Posterior cingulate gyrus (tissue), 11 donors: ENCODE measurements at regions of chr9 and their contacts with region 1.

Region 1: GRCh38 chr9:130042833-130043653 is at the start of gene FNBP1:
- DNase-seq: peak; percentile 66 to 97 (median 78)

Region 2: GRCh38 chr9:129436751-129437625 is 606.1 kb before region 1 on chr9:
- intact Hi-C with region 1: no loop called
- DNase-seq: peak; percentile 44 to 95 (median 68)

Region 3: DNA sequence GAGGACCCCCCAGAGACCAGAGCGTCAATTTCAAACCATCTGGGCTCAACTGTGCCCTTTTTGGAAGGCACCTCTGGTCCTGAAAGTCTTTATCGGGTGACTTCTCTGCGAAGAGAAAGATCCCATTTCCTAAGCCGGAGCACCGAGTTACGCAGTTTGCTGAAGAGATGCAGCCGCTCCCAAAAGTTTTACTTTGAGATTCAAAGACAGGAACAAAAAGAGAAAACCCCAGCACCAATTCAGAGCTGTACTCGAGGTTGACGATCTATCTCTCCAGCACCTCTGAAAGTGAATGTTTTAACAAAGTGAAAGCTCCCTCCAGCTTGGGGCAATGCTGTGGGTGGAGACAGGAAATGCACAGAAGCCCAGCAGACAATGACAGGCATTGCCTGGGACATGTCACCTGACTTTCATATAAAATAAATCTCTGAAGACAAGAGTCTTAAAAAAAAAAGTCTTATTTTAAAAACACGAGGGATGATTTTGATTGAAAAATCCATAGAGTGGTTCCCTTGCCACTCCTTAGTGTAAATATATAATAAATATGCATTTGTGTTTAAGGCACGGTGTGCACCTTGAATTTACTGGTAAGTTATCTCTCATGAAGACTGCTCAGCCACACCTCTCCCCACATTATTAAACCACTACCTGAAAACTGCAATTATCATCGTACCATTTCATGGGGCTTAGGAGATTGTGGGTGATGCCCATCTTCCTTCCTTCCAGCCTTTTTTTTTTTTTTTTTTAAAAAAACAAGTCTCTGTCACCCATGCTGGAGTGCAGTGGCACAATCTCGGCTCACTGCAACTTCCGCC is 79.9 kb before region 1 on chr9:
- intact Hi-C with region 1: loop called (anchors 10 kb)
- DNase-seq: peak in 1 of 10 donors; percentile 40